Activated CD8-positive, alpha-beta T cell treated with anti-CD3 and anti-CD28 coated beads for 36 hours (primary cell): ENCODE measurements at regions of chr19 and their contacts with region 1.

Region 1: GRCh38 chr19:5031231-5032100 is 62.6 kb downstream of the KDM4B start:
- DNase-seq: peak; percentile 87
- ATAC-seq: peak; percentile 94
- H3K4me3 Mint-ChIP-seq: no peak overlapping the region
- H3K27ac Mint-ChIP-seq: no peak overlapping the region
- H3K4me1 Mint-ChIP-seq: peaks cover 5% of the 10 kb centered on the region
- H3K27me3 Mint-ChIP-seq: no peaks in the 10 kb centered on the region
- CTCF ChIP-seq: peak; percentile 91

Region 2: DNA sequence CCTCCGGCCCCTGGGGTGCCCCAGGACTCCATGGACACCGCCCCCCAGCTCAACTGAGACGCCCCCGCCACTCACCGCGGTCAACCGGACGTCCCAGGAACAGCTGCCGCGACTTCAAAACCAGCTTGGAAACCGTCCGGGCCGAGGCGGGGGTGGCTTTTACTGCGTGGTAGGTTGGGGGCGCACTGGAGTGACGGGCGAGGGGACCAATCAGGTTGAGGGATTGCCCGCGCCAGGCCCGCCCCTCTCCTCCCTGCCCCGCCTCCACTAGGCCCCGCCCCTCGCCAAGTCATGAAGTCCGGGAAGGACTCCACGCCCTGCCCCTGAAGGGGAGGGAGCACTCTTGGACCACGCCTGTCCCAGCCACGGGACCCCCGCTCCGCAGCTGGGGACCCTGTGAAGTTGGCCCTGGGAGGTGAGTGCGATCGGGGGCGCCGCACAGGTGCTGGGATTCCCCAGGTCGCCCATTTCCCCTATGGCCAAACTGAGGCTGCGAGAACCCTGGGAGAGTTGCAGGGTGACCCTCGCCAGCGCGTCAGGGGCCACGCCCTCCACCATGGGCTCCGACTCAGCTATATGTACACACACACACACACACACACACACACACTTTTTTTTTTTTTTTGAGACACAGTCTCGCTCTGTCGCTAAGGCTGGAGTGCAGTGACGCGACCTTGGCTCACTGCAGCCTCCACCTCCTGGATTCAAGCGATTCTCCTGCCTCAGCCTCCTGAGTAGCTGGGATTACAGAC is 163.8 kb before region 1 on chr19 and contains the start of gene PLIN3:
- CTCF ChIA-PET with region 1: interaction called, 54 read pairs
- POLR2A ChIA-PET with region 1: no interaction called
- intact Hi-C with region 1: loop called (anchors 5 kb)
- DNase-seq: peak; percentile 97
- ATAC-seq: peak; percentile 95
- H3K4me3 Mint-ChIP-seq: peak within 1 kb of the TSS; percentile 75
- H3K27ac Mint-ChIP-seq: peak within 1 kb of the TSS; percentile 59
- H3K4me1 Mint-ChIP-seq: peaks cover 15% of the 10 kb centered on the region
- H3K27me3 Mint-ChIP-seq: peaks cover 2% of the 10 kb centered on the region
- CTCF ChIP-seq: no peak
- total RNA-seq, gene PLIN3: 15.5 to 23.5 TPM

Region 3: DNA sequence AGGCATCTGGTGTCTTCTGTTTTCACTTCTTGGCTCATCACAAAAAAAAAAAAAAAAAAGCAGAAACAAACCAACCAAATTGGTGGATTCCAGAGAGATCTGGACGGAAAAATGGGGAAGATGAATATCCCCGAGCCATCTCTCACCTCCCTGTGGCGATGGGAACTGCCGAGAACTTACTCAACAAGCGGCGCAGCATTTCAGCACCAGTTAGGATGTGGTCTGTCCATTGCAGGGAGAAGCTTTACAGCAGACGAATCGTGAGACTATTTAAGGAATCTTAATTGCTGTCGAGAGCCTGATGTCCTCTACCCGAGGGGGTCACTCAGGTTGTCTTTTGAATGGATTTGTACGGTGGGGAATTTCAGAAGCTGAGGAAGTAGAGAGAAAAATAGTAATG is 79.8 kb before region 1 on chr19:
- CTCF ChIA-PET with region 1: no interaction called
- POLR2A ChIA-PET with region 1: no interaction called
- intact Hi-C with region 1: no loop called
- DNase-seq: no peak
- ATAC-seq: no peak
- H3K4me3 Mint-ChIP-seq: no peak overlapping the region
- H3K27ac Mint-ChIP-seq: no peak overlapping the region
- H3K4me1 Mint-ChIP-seq: no peaks in the 10 kb centered on the region
- H3K27me3 Mint-ChIP-seq: no peaks in the 10 kb centered on the region
- CTCF ChIP-seq: no peak

Region 4: DNA sequence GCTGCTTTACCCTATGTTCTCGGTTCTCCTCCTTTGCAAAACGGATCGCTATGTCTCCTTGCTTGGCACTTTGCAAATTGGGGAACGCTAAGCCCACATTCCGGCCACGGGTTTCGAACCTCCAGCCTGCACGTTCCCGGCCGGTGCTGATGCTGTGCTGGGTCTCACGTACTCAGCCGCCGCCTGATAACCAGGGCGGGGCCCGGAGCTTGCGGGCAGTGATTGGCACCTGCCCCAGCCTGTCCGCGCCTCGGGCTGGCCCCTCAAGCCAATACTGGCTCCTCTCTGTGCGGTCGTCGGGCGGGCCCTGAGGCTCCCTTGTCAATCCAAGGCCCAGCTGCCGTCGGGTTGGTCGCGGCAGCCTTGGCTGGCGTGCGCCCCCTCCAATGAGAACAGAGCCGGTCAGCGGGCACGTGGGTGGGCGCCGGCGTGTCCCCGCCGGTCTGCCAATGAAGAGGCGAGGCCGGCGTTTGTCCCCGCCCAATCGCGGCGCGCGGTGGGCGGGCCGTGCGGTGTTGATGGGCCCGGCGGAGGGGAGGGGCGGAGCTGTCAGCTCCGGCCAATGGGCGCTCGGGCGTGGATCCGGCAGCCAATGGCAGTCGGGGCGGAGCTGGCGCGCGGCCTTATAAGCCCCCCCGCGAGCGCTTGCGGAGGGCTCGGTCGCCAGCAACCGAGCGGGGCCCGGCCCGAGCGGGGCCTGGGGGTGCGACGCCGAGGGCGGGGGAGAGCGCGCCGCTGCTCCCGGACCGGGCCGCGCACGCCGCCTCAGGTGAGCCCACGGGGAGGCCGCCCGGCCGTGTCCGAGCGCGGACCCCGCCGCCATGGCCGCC is 62.8 kb before region 1 on chr19 and contains the start of gene KDM4B:
- CTCF ChIA-PET with region 1: interaction called, 30 read pairs
- POLR2A ChIA-PET with region 1: no interaction called
- intact Hi-C with region 1: no loop called
- DNase-seq: peak; percentile 99
- ATAC-seq: peak; percentile 95
- H3K4me3 Mint-ChIP-seq: peak within 1 kb of the TSS; percentile 95
- H3K27ac Mint-ChIP-seq: peak within 1 kb of the TSS; percentile 96
- H3K4me1 Mint-ChIP-seq: peaks cover 36% of the 10 kb centered on the region
- H3K27me3 Mint-ChIP-seq: no peaks in the 10 kb centered on the region
- CTCF ChIP-seq: no peak
- total RNA-seq, gene KDM4B: 46.3 to 46.6 TPM

Region 5: DNA sequence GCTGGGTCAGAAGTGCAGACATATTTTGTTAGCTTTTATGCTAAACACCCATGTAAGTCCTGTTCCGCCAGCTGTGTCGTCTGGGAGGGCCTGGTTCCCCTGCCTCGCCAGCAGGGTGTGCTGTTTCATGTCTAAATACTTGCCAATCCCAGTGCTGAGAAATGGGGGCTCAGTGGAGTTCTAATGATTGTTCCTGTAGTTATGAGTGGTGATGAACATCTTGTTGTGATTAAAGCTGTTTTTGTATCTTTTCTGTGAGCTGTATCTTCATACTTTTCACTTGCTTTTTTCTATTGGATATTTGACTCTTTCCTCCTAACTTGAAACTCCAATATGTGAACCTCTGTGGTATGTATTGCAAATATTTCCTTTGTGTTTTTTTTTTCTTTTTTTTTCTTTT is 29.9 kb before region 1 on chr19:
- CTCF ChIA-PET with region 1: interaction called, 60 read pairs
- POLR2A ChIA-PET with region 1: no interaction called
- intact Hi-C with region 1: no loop called
- DNase-seq: peak; percentile 44
- ATAC-seq: peak; percentile 47
- H3K4me3 Mint-ChIP-seq: no peak overlapping the region
- H3K27ac Mint-ChIP-seq: no peak overlapping the region
- H3K4me1 Mint-ChIP-seq: peaks cover 5% of the 10 kb centered on the region
- H3K27me3 Mint-ChIP-seq: no peaks in the 10 kb centered on the region
- CTCF ChIP-seq: peak; percentile 58

Region 6: GRCh38 chr19:5093297-5093928 is 61.9 kb after region 1 on chr19:
- CTCF ChIA-PET with region 1: no interaction called
- POLR2A ChIA-PET with region 1: no interaction called
- intact Hi-C with region 1: no loop called
- DNase-seq: no peak
- ATAC-seq: no peak
- H3K4me3 Mint-ChIP-seq: no peak overlapping the region
- H3K27ac Mint-ChIP-seq: no peak overlapping the region
- H3K4me1 Mint-ChIP-seq: no peaks in the 10 kb centered on the region
- H3K27me3 Mint-ChIP-seq: no peaks in the 10 kb centered on the region
- CTCF ChIP-seq: no peak